Dendritic cell treated with granulocyte-macrophage colony-stimulating factor and Interleukin-4, amounts not matched to agents 40 ng/mL and 50 ng/mL, for 4 days (primary cell): ENCODE measurements at regions of chr10 and their contacts with region 1.

Region 1: GRCh38 chr10:20017961-20018360 is 201.7 kb downstream of the PLXDC2 start:
- H3K4me3 Mint-ChIP-seq: no peak overlapping the region
- H3K27ac Mint-ChIP-seq: peak overlapping the region; percentile 71
- H3K4me1 Mint-ChIP-seq: peaks cover 36% of the 10 kb centered on the region
- H3K27me3 Mint-ChIP-seq: no peaks in the 10 kb centered on the region

Region 2: GRCh38 chr10:19966751-19967150 is 51.2 kb before region 1 on chr10:
- intact Hi-C with region 1: loop called (anchors 10 kb)
- H3K4me3 Mint-ChIP-seq: no peak overlapping the region
- H3K27ac Mint-ChIP-seq: no peak overlapping the region
- H3K4me1 Mint-ChIP-seq: peaks cover 27% of the 10 kb centered on the region
- H3K27me3 Mint-ChIP-seq: no peaks in the 10 kb centered on the region

Region 3: DNA sequence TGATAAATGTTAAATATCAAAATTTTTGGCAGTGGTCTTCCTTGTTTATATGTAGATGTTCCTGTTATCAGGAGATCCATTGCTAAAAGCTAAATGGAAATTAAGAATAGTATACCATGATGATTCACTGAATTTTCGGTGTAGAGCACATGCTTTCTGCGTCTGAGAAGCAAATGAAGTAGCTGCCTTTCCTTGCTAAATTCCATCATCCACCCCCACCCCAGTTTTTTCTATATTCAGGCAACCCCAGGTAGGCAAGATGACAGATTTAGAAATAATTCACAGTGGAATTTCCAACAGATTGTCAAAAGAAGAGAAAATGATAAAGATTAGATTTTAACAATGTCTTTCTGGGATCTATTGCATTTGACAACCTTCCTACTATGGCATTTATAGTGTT is 30.2 kb after region 1 on chr10:
- intact Hi-C with region 1: no loop called
- H3K4me3 Mint-ChIP-seq: no peak overlapping the region
- H3K27ac Mint-ChIP-seq: no peak overlapping the region
- H3K4me1 Mint-ChIP-seq: peaks cover 7% of the 10 kb centered on the region
- H3K27me3 Mint-ChIP-seq: no peaks in the 10 kb centered on the region